Prostate gland (tissue), 2 donors: ENCODE measurements at regions of chr10 and their contacts with region 1.

Region 1: DNA sequence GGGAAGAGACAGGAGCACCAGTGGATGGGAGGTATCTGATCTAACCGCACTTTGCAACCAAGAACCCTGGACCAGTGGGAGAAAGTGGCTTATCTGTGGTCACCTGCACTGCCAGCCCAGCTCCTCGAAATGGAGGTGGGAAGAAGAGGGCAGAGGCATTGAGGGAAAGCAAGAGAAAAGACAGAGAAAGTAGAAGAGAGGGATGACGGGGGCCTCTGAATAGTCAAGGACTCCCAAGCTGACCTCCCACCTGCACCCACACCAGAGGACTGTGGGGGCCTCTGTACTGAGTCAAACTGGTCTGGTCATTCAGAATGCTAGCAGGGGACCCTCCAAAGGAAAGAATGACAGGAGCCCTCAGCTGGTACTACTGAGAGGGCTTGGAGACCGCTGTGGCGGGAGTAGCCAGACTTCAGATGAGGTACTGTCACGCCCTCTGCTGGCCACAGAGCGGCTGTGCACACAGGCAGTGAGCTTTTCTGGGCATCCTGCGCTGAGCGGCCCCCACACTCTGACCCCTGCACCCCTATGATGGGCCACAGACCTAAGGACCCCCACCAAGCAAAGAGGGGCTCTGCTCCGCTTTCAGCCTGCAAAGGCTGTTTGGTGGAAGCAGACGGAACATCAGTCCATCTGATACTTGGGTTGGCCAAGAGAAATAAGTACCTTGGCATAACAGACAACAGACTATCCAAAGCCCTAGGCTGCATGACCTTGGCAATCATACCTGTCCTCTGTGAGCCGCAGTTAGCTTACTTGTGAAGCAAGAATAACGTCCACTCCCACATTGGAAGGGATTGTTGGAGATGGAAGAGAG is 112.9 kb downstream of the COL13A1 start:
- DNase-seq: peak; percentile 75
- H3K4me3 ChIP-seq: no peak overlapping the region
- H3K27ac ChIP-seq: no peak overlapping the region
- H3K4me1 ChIP-seq: peaks cover 32% of the 10 kb centered on the region
- H3K27me3 ChIP-seq: no peaks in the 10 kb centered on the region
- CTCF ChIP-seq: peak; percentile 95 to 96 (median 96)
- POLR2A ChIP-seq: no peak

Region 2: GRCh38 chr10:69290993-69291392 is 623.6 kb before region 1 on chr10:
- intact Hi-C with region 1: no loop called
- DNase-seq: no peak
- H3K4me3 ChIP-seq: no peak overlapping the region
- H3K27ac ChIP-seq: no peak overlapping the region
- H3K4me1 ChIP-seq: no peaks in the 10 kb centered on the region
- H3K27me3 ChIP-seq: no peaks in the 10 kb centered on the region
- CTCF ChIP-seq: no peak
- POLR2A ChIP-seq: no peak

Region 3: DNA sequence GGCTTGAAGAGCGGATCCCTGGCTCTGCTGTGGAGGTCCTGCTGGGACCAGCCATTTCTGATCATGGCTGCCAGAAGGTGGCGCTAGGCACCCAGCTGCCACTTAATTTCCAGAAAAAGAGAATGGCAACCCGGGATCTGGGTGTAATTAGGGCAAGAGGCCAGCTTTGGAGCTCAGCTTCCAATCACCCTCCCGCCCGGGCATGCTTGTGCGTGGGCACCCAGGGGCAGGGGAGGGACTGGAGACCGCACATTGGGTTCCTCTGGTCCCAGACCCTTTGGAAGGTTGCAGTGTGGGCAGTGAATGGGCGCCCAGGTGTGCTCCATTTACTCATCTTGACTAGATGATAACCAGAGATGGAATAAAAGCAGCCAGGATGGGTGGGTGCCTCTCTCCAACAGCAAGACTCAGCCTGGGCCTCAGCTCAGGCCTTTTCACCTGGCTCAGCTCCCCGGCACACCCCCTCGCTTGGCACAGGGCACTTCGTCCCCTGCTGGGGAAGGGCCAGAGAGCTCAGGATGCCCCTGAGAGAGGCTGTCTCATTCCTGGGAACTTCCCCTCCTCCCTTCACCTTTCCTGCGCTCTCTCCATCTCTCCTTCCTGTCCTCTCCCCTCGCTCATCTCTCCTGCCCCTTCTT is 269.8 kb before region 1 on chr10:
- intact Hi-C with region 1: loop called (anchors 2 kb)
- DNase-seq: peak; percentile 45
- H3K4me3 ChIP-seq: no peak overlapping the region
- H3K27ac ChIP-seq: no peak overlapping the region
- H3K4me1 ChIP-seq: no peaks in the 10 kb centered on the region
- H3K27me3 ChIP-seq: no peaks in the 10 kb centered on the region
- CTCF ChIP-seq: peak; percentile 81 to 93 (median 86)
- POLR2A ChIP-seq: no peak

Region 4: GRCh38 chr10:69786791-69787190 is 127.8 kb before region 1 on chr10:
- intact Hi-C with region 1: loop called (anchors 5 kb)
- DNase-seq: no peak
- H3K4me3 ChIP-seq: no peak overlapping the region
- H3K27ac ChIP-seq: no peak overlapping the region
- H3K4me1 ChIP-seq: no peaks in the 10 kb centered on the region
- H3K27me3 ChIP-seq: no peaks in the 10 kb centered on the region
- CTCF ChIP-seq: no peak
- POLR2A ChIP-seq: no peak

Region 5: DNA sequence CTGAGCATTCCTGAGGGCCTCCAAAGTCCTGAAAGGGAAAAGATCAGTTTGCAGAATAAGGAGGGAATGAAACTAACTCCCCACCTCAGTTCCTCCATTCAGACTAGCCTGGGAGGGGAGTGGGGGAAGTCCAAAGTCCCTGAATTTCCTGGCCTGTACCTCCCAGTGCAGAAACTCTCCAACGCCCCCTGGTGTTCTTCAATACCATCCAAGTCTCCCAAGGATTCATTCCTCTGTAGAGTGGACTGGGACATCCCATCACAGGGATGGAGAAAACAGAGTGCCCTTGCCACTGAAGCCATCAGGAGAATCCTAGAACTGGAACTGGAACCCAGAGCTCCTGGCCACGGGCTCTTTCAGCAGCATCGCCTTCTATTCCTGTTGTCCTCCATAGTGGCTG is 114.5 kb before region 1 on chr10:
- intact Hi-C with region 1: loop called (anchors 5 kb)
- DNase-seq: peak; percentile 28
- H3K4me3 ChIP-seq: no peak overlapping the region
- H3K27ac ChIP-seq: no peak overlapping the region
- H3K4me1 ChIP-seq: peaks cover 3% of the 10 kb centered on the region
- H3K27me3 ChIP-seq: no peaks in the 10 kb centered on the region
- CTCF ChIP-seq: peak in 3 of 4 experiments; percentile 33 to 39 (median 38)
- POLR2A ChIP-seq: no peak

Region 6: DNA sequence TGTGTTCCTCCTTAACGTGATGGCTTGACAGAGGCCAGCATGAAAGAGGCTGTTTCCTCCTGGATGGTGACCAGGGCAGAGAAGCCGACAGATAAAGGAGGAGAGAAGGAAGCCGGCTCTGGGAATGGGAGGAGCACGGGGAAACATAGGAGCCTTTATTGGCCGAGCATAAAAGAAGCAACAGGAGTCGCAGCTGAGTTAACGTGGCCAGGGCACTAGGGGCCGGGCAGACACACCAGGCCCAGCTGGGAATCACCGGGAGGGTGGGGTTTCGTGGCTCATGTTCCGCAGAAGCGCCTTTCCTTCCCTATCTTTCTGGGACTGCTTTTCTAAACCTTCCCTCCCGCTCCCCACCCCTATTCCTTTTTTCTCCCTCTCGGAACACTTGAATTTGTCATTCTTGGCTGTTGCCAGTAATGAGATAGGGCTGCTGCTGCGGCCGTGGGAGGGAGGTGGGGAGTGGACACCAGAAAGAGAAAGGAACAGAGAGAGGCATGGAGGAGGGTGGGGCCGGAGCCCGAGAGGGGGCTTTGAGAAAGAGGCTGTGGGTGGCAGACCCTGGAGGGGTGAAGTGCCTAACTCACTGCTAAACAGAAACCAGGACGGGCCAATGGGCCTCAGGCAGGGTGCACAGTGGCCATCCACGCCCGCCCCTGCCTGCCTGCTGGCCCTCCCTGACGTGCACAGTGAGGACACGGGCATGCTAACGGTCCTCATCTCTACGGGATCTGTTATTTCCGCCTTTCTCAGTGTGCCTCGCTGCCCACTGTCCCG is 47.7 kb before region 1 on chr10:
- intact Hi-C with region 1: loop called (anchors 2 kb)
- DNase-seq: peak; percentile 66
- H3K4me3 ChIP-seq: peak overlapping the region in 1 of 2 donors; percentile 7
- H3K27ac ChIP-seq: peak overlapping the region; percentile 61 to 70
- H3K4me1 ChIP-seq: no peaks in the 10 kb centered on the region
- H3K27me3 ChIP-seq: no peaks in the 10 kb centered on the region
- CTCF ChIP-seq: no peak
- POLR2A ChIP-seq: no peak

Region 7: DNA sequence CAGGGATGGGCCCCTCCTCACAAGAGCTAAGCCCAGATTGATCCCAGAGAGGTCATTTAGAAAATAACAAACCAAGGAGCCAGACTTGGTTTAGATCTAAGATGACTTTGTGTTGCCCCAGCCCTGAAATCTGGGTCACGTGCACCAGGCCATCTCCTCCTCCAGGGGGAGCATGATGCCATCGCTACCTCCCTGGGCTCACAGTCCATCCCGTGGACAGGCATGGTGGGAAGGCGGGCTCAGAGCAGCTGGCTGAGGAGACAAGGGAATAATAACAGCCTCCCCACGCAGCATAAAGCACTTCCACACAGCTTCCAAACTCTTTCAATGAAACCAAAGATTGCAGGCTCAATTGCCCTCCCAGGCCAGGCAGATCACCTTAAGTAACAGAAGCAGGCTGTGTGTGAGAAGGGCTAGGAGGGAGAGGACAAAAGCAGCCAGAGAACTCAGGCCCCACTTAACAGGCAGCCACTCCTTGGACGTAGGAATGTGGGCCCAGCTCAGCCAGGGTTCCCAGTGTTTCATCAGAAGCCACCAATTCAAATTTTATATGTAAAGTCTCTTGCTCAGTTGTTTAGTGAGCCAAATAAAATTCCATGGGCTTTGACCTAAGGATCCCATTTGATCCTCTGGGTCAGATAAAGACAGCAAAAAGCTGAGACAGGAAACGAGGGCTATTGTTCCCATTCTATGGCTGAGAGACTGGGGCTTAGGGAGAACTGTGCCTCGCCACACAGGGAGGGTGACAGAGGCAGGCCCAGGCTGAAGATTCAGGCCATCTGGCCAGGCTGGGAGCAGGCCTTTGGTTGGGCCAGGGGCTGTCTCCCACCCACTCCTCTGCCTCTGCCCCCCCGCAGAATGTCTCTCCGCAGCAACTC is 12.7 kb before region 1 on chr10:
- intact Hi-C with region 1: loop called (anchors 2 kb)
- DNase-seq: peak; percentile 44
- H3K4me3 ChIP-seq: no peak overlapping the region
- H3K27ac ChIP-seq: peak overlapping the region in 1 of 2 donors; percentile 39
- H3K4me1 ChIP-seq: no peaks in the 10 kb centered on the region
- H3K27me3 ChIP-seq: no peaks in the 10 kb centered on the region
- CTCF ChIP-seq: peak in 3 of 4 experiments; percentile 69 to 82 (median 71)
- POLR2A ChIP-seq: no peak